Endothelial cell of umbilical vein (primary cell): ENCODE measurements at regions of chr14 and their contacts with region 1.

Region 1: DNA sequence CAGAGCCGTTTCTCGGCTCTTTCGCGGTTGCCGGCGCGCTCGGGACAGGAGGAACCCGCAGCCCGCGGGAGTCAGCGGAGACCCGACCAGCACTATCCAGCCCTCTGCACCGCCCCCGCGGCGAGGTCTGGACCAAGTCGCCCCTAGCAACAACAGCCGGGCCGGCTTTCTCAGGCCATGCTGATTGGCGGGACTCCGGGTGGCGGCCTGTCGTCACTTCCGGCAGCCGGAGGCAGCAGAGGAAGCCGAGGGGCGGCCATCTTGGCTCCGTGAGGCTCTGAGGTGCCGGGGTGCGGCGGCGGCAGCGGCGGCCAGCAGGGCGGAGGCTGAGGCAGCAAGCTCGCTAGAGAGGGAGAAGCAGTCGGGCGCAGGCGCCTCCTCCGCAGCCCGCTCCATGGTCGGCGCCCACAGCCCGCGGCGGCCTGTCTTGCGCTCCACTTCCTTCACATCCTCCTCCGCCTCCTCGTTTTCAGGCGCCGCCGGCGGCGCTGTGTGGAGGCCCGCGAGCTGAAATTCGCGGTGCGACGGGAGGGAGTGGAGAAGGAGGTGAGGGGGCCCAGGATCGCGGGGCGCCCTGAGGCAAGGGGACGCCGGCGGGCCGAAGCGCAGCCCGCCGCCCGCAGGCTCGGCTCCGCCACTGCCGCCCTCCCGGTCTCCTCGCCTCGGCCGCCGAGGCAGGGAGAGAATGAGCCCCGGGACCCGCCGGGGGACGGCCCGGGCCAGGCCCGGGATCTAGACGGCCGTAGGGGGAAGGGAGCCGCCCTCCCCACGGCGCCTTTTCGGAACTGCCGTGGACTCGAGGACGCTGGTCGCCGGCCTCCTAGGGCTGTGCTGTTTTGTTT is at the start of gene MARK3:
- DNase-seq: peak; percentile 97
- H3K4me3 ChIP-seq: peak within 1 kb of the TSS; percentile 57 to 95 (median 82)
- H3K27ac ChIP-seq: peak within 1 kb of the TSS; percentile 74
- H3K4me1 ChIP-seq: peaks cover 26% of the 10 kb centered on the region
- H3K27me3 ChIP-seq: peaks cover 0 to 3% of the 10 kb centered on the region in 2 experiments
- CTCF ChIP-seq: peak; percentile 13 to 18
- POLR2A ChIP-seq: peak; percentile 88
- total RNA-seq, gene MARK3: 81.2 and 96.1 TPM in 2 replicates

Region 2: GRCh38 chr14:103121846-103122584 is 263.4 kb before region 1 on chr14:
- CTCF ChIA-PET with region 1: no interaction called
- POLR2A ChIA-PET with region 1: no interaction called
- dilution Hi-C with region 1: no loop called
- intact Hi-C with region 1: loop called (anchors 10 kb)
- DNase-seq: peak; percentile 73
- H3K4me3 ChIP-seq: no peak overlapping the region
- H3K27ac ChIP-seq: peak overlapping the region; percentile 42
- H3K4me1 ChIP-seq: peaks cover 32% of the 10 kb centered on the region
- H3K27me3 ChIP-seq: no peaks in the 10 kb centered on the region
- CTCF ChIP-seq: no peak
- POLR2A ChIP-seq: no peak

Region 3: DNA sequence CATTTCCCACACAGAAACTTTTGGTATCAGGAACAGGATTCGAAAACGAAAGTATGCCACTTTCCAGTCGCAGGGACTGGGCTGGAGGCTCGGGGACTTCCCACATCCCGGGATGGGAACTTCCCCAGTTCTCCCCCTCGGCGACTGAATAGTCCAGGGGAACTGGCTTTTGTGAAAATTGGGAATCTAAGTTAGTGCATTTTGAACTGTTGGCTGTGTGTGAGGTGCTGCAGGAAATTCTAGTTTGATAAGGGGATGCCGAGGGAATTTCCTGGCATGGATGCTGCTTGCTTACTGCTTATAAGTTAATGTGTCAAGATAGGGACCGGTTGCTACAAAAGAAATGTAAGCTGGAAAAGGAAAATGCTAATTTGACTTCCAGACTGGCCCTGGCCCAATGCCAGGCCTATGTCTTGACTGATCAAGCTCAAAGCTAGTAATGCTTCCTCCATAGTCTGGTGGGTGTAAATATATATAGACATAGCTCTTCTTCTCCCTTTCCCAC is 124.7 kb before region 1 on chr14:
- CTCF ChIA-PET with region 1: no interaction called
- POLR2A ChIA-PET with region 1: no interaction called
- dilution Hi-C with region 1: no loop called
- intact Hi-C with region 1: no loop called
- DNase-seq: peak; percentile 73
- H3K4me3 ChIP-seq: peak overlapping the region; percentile 44 to 83 (median 80)
- H3K27ac ChIP-seq: peak overlapping the region; percentile 70
- H3K4me1 ChIP-seq: peaks cover 4% of the 10 kb centered on the region
- H3K27me3 ChIP-seq: peaks cover 7% of the 10 kb centered on the region in 2 experiments
- CTCF ChIP-seq: no peak
- POLR2A ChIP-seq: no peak

Region 4: DNA sequence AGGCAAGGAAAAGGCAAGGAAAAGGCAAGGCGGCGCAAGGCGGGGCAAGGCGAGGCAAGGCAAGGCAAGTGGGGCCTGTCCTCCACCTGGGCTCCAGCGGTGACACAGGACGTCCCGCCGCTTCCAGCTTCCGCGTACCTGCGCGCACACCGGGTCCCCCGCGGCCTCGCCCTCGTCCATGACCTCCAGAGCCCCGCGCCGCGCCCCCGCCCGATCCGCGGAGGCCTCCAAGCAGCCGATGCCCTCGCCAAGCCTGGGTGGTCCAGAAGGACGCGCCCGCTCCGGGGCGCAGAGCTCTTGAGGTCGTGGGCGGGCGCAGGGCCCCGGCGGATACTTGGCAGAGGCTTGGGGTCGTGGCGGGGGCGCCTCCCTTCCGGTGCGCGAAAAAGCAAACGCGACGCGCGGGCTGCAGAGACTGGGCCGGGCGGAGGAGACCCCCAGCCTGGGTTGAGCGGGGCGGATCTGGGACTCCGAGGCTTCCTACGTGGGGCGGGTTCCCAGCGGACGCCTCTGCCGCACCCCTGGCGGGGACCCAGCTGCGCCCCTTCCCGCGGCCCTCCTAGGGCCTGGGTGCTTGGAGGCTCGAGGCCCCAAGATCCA is 112.1 kb before region 1 on chr14:
- CTCF ChIA-PET with region 1: no interaction called
- POLR2A ChIA-PET with region 1: no interaction called
- dilution Hi-C with region 1: no loop called
- intact Hi-C with region 1: no loop called
- DNase-seq: no peak
- H3K4me3 ChIP-seq: no peak overlapping the region
- H3K27ac ChIP-seq: no peak overlapping the region
- H3K4me1 ChIP-seq: no peaks in the 10 kb centered on the region
- H3K27me3 ChIP-seq: peaks cover 30 to 56% of the 10 kb centered on the region in 2 experiments
- CTCF ChIP-seq: no peak
- POLR2A ChIP-seq: no peak

Region 5: DNA sequence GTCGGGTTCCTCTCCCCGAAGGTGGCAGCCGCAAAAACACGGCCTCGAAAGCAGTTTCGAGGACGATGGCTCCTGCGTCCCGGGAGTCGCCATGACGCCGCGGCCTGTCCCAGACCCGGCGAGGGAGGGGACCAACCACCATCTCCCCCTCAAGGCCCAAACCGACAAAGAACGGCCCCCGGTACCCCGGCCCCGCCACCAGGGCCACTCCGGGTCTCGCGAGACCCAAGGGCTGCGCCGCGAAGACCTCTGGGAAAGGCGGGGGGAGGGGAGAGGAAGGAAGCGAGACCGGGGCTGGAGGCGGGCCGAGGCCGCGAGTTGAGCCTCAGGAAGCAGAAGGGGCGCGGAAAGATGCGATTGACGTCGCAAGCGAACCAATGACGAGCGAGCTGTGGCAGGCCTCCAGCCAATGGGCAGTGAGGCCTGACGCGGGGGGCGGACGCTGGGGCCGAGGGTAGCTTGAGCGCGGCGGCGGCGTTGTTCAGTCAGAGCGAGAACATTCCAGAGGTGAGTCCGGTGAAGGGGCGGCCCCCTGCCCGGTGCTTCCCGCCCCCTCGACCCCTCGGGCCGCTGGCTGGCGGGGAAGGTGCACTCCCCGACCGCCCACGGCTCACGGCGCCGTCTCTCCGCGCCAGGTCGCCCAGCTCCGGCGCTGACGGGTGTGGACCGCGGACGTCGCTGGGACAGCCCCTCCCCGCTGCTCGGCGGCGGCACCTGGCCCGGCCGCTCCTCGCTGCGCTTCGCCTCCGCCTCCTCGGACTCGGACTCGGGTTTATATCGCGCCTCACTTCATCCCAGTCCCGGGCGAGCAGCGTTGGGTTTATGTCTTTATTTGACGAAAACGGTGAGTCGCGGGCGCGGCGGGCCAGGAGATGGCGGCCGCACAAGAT is 51.4 kb before region 1 on chr14 and contains the start of gene EIF5:
- CTCF ChIA-PET with region 1: interaction called, 30 read pairs
- POLR2A ChIA-PET with region 1: interaction called, 4 read pairs
- dilution Hi-C with region 1: no loop called
- intact Hi-C with region 1: loop called (anchors 1 kb)
- DNase-seq: peak; percentile 99
- H3K4me3 ChIP-seq: peak within 1 kb of the TSS; percentile 59 to 99 (median 78)
- H3K27ac ChIP-seq: peak within 1 kb of the TSS; percentile 93
- H3K4me1 ChIP-seq: peaks cover 12% of the 10 kb centered on the region
- H3K27me3 ChIP-seq: peaks cover 0 to 6% of the 10 kb centered on the region in 2 experiments
- CTCF ChIP-seq: no peak
- POLR2A ChIP-seq: peak; percentile 99
- total RNA-seq, gene EIF5: 294 and 313 TPM in 2 replicates

Region 6: DNA sequence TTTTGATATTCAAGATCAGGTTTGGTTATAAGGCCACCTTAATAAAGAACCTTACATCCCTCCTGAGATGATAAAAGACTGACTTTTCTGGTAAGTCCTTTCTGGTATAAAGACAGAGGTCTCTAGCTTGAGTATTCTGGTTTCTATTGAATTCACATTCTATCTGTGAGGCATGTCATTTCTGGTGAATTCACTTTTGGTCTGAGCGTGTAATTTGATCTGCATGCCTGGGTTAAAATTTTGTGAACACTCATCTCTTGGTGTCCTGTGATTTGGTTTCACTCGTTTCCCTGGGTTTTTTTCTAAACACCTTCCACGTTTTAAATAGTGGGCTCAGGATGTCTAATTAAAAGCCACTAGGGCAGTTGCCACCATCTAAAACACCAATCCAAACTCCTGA is 39.1 kb before region 1 on chr14:
- CTCF ChIA-PET with region 1: interaction called, 74 read pairs
- POLR2A ChIA-PET with region 1: interaction called, 19 read pairs
- dilution Hi-C with region 1: no loop called
- intact Hi-C with region 1: loop called (anchors 5 kb)
- DNase-seq: no peak
- H3K4me3 ChIP-seq: no peak overlapping the region
- H3K27ac ChIP-seq: no peak overlapping the region
- H3K4me1 ChIP-seq: no peaks in the 10 kb centered on the region
- H3K27me3 ChIP-seq: no peaks in the 10 kb centered on the region
- CTCF ChIP-seq: no peak
- POLR2A ChIP-seq: no peak

Region 7: DNA sequence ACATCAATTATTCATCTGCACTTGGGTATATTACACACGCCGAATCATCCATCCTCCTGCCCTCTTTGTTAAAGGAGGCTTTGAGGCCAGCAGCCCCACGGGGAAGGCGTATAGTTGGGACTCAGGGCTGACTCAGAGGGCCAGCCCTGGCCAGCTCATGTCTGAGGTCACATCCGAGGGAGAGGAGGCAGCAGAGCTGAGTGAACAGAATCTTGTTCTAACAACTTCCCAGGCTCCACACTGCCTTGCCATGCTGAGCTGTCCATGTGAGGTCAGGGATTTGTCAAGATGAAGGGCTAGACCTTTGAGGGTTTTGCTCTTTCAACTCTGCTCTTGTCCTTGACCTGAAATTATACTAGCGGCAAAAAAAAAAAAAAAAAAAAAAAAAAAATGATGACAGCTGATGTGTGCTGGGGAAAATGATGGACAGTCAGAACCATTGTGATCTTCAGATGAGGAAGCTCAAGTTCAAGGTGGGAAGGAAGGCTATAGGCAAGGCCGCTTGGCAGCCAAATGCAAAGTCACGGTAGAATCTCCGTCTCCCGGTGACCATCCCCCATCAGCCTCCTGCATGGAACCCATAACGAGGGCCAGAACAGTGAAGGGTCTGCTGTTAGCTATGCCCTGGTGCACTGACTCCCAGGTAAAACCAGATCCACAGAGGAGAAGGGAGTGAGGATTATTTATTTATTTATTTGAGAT is 12.6 kb before region 1 on chr14:
- CTCF ChIA-PET with region 1: interaction called, 13 read pairs
- POLR2A ChIA-PET with region 1: interaction called, 3 read pairs
- dilution Hi-C with region 1: no loop called
- intact Hi-C with region 1: loop called (anchors 1 kb)
- DNase-seq: peak; percentile 87
- H3K4me3 ChIP-seq: no peak overlapping the region
- H3K27ac ChIP-seq: peak overlapping the region; percentile 1
- H3K4me1 ChIP-seq: peaks cover 4% of the 10 kb centered on the region
- H3K27me3 ChIP-seq: no peaks in the 10 kb centered on the region
- CTCF ChIP-seq: no peak
- POLR2A ChIP-seq: no peak